ENCODE measurements at regions of chr12 and their contacts with region 1.

Region 1: DNA sequence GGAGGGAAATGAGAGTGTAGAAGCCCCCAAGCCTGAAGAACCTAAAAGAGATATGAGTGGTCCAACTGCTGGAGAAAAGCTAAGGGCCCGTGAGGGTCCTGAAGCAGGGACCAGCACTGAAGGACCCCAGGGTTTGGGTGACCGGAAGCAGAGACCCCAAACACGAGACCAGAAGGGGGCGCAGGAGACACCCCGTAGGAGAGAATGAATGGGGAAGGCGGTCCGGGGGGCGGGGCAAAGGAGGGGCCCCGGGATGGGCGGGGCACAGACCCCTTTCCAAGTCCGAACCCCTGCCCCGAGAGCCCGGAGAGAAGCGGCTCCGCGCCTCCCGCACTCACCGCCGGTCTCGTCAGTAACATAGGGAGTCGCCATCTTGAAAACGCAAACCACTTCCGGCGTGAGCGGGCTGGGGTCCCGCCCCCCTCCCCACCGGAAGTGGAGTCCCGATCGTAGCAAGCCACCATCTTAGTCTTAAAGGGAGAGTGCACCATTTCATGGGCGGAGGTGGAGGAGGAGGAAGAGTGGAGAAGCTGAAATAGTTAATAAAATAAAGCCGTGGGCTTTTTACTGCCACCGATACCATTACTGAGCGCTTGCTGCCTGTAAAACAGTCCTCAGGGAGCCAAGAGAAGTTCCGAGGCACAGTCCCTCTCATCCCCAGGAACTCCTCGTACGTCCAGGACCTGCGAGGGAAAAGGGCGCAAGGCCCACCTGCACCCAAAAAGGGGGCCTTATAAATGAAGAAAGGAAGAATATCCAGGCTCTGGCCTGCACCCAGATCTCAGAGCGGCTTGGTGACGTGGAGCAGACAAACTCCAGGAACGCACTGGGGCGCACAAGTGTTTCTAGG is 731 bp downstream of the PYM1 start:
- DNase-seq: peak; percentile 96
- H3K4me3 Mint-ChIP-seq: peak overlapping the region; percentile 89
- H3K27ac Mint-ChIP-seq: peak overlapping the region; percentile 99
- H3K4me1 Mint-ChIP-seq: peaks cover 39% of the 10 kb centered on the region
- H3K27me3 Mint-ChIP-seq: no peaks in the 10 kb centered on the region

Region 2: GRCh38 chr12:55829967-55830600 is 96.9 kb before region 1 on chr12:
- CTCF ChIA-PET with region 1: interaction called, 18 read pairs
- POLR2A ChIA-PET with region 1: interaction called, 6 read pairs
- DNase-seq: peak; percentile 31
- H3K4me3 Mint-ChIP-seq: peak overlapping the region; percentile 96
- H3K27ac Mint-ChIP-seq: peak overlapping the region; percentile 90
- H3K4me1 Mint-ChIP-seq: peaks cover 54% of the 10 kb centered on the region
- H3K27me3 Mint-ChIP-seq: no peaks in the 10 kb centered on the region

Region 3: GRCh38 chr12:55874443-55874842 is 52.5 kb before region 1 on chr12:
- CTCF ChIA-PET with region 1: no interaction called
- POLR2A ChIA-PET with region 1: no interaction called
- DNase-seq: no peak
- H3K4me3 Mint-ChIP-seq: no peak overlapping the region
- H3K27ac Mint-ChIP-seq: no peak overlapping the region
- H3K4me1 Mint-ChIP-seq: peaks cover 7% of the 10 kb centered on the region
- H3K27me3 Mint-ChIP-seq: no peaks in the 10 kb centered on the region

Region 4: DNA sequence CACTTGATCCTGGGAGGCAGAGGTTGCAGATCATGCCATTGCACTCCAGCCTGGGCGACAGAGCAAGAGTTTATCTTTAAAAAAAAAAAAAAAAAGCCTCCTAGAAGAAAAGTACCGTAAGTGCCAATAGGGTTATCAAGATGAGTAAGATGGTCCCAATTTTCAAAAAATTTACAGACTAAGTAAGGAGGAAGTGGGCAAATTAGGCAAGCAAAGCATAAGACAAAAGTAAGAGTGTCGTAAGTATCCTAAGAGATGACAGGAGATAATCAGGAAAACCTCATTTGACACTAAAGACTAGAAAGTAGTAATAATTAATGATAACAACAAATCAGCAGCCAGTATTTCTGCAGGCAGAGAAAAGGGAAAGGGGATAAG is 11.5 kb before region 1 on chr12:
- CTCF ChIA-PET with region 1: interaction called, 12 read pairs
- POLR2A ChIA-PET with region 1: no interaction called
- DNase-seq: no peak
- H3K4me3 Mint-ChIP-seq: no peak overlapping the region
- H3K27ac Mint-ChIP-seq: peak overlapping the region; percentile 14
- H3K4me1 Mint-ChIP-seq: peaks cover 38% of the 10 kb centered on the region
- H3K27me3 Mint-ChIP-seq: no peaks in the 10 kb centered on the region

Region 5: GRCh38 chr12:55940065-55940732 is 13.2 kb after region 1 on chr12:
- CTCF ChIA-PET with region 1: interaction called, 45 read pairs
- POLR2A ChIA-PET with region 1: interaction called, 3 read pairs
- DNase-seq: peak; percentile 90
- H3K4me3 Mint-ChIP-seq: peak overlapping the region; percentile 36
- H3K27ac Mint-ChIP-seq: peak overlapping the region; percentile 73
- H3K4me1 Mint-ChIP-seq: peaks cover 80% of the 10 kb centered on the region
- H3K27me3 Mint-ChIP-seq: no peaks in the 10 kb centered on the region

Region 6: DNA sequence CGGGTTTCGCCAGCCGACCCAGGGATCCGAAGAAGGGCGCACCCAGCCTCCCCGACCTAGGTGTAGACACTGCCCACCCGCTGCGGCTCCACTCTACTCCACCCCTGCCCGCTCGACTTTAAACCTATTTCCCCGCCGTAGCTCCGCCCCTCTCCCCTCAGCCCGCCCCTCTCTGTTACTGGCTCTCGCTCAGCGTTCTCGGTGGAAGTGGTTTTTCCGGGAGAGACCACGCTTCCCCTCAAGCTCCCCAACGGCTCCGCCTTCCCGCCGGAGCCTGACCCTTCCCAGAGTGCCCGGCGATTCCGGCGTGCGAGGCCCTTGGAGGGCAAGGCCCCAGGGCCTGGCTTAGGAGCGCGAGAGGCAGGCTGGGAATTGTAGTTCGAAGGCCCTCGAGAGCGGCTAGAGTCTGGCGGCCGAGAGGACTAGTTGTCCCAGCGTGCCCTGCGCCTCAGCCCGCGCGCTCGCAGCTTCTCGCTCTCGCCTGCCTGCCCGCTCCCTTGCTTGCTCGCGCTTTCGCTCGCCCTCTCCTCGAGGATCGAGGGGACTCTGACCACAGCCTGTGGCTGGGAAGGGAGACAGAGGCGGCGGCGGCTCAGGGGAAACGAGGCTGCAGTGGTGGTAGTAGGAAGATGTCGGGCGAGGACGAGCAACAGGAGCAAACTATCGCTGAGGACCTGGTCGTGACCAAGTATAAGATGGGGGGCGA is 177.3 kb after region 1 on chr12 and contains the start of gene PA2G4:
- CTCF ChIA-PET with region 1: no interaction called
- POLR2A ChIA-PET with region 1: no interaction called
- DNase-seq: peak; percentile 99
- H3K4me3 Mint-ChIP-seq: peak within 1 kb of the TSS; percentile 99
- H3K27ac Mint-ChIP-seq: peak within 1 kb of the TSS; percentile 98
- H3K4me1 Mint-ChIP-seq: peaks cover 62% of the 10 kb centered on the region
- H3K27me3 Mint-ChIP-seq: no peaks in the 10 kb centered on the region
- total RNA-seq, gene PA2G4: 244 to 289 TPM

Measured in activated CD4-positive, alpha-beta T cell treated with anti-CD3 and anti-CD28 coated beads, Interleukin-2, amount 10 ng/mL, durations not matched to agents 7 days and 5 days (primary cell).